HEK293T (cell line): ENCODE measurements at regions of chrX and their contacts with region 1.

Region 1: DNA sequence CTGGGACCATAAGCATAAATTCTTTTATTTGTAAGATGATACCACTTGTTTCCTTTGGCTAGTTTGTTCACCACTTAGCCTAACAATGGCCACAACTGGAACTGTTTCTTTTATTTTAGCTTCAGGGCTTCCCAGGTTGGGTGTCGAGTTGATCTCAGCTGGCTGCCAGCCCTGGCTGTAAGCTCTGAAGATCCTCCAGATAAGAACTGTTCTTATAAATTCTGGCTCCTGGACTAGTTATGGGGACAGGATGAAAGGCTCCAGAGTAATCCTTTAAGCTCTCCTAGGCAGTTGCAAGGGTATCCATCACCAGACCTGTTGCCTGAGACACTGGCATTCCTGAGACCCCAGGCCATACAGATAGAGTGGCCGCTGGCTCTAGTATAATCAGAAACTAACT is 129.4 kb upstream of the ACSL4 start:
- DNase-seq: no peak

Region 2: DNA sequence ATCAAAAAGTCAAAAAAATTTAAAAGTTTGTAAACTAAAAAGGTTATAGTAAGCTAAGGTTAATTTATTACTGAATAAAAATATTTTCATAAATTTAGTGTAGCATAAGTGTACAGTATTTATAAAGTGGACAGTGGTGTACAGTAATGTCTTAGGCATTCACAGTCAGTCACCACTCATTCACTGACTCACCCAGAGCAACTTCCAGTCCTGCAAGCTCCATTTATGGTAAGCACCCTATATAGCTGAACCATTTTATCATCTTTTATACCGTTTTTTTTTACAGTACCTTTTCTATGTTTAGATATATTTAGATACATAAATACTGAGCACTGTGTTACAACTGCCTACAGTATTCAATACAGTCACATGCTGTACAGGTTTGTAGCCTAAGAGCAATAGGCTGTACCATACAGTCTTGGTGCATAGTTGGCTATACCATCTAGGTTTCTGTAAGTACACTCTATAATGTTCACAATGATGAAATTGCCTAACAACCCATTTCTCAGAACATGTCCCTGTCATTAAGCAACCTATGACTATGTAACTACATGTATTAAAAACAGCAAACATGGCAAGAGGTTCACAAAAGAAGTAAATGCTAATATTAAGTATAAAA is 148.0 kb before region 1 on chrX:
- CTCF ChIA-PET with region 1: interaction called, 83 read pairs
- POLR2A ChIA-PET with region 1: no interaction called
- DNase-seq: no peak

Region 3: DNA sequence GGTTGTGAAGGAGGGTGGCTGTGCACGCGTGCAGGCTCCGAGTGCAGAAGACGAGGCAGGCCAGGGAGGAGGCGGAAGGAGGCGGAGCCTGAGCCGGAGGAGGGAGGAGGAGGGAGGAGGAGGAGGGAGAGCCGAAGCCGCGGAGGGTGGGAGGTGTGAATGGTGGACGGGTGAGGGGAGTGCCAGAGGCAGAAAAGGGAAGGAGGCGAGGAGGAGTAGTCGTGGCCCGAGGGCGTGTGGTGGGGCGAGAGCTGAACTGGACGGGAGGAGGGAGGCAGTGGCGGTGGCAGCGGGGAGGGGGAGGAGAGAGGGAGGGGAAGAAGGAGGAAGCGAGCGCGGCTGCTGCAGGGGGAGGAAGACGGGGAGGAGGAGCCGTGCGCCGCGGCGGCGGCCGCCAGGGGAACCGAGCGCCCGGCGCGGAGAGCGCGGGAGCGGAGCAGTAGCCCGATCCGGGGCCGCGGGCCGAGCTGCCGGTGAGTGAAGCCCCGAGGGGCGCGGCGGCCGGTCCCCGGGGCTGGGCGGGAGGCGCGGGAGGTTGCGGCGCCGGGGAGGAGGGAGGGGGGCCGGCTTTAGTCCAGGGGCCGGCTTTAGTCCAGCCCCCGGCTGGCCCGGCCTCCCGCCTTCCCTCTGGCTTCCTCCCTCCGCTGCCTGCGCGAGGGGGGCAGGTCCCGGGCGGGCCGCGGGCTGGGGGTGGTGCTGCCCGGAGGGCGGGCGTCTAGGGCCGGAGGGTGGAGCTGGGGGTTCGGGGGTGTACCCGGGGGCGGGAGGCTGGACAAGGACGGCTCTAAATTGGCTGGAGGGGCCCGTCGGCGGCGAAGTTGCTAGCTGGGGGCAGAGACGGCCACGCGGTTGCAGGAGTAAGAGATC is 140.1 kb after region 1 on chrX and contains the start of gene TMEM164:
- CTCF ChIA-PET with region 1: no interaction called
- POLR2A ChIA-PET with region 1: no interaction called
- DNase-seq: peak; percentile 79